HCT116 (cell line): ENCODE measurements at regions of chr18 and their contacts with region 1.

Region 1: GRCh38 chr18:741931-742512 is 29.6 kb upstream of the ENOSF1 start:
- DNase-seq: peak; percentile 34
- ATAC-seq: peak; percentile 85
- H3K4me3 ChIP-seq: no peak overlapping the region
- H3K27ac ChIP-seq: no peak overlapping the region
- H3K4me1 ChIP-seq: no peaks in the 10 kb centered on the region
- H3K27me3 ChIP-seq: no peaks in the 10 kb centered on the region
- CTCF ChIP-seq: peak; percentile 58 to 80 (median 76); a peak in 5 of 6 replicates
- POLR2A ChIP-seq: no peak
- RAD21 ChIP-seq: peak; percentile 82

Region 2: DNA sequence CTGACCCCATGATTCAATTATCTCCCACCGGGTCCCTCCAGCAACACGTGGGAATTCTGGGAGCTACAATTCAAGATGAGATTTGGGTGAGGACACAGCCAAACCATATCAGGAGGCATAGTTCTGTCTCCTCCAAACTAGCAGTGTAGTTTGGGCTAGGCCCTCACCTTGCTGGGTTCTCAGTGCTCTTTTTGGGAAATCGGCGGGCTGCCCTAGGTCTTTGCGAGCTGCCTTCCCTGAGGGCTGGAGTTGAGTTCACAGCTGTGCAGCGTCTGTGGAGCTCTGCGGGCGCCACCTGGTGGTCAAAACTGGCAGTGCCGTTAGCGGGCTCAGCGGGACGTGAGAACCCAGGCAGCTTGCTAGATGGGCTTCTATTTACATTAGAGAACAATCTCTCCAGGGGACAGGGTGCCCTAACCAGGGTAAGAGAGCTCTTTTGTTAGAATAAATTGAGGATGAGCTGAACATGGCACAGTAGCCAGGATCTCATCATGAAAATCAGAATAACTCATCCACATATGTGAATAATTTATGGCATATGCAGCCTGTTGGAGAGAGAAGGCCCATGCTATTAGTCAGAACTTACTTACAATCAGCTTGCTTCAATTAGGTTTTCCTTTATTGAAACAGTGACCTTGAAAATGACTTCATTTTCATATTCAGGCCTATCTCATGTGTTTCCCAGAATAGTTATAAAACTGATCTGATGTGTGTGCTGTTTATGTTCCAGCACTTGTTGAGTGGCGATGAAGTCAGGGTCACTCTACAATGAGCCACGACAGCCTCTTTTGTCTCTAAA is 97.4 kb after region 1 on chr18:
- CTCF ChIA-PET with region 1: interaction called, 16 read pairs
- POLR2A ChIA-PET with region 1: no interaction called
- RAD21 ChIA-PET with region 1: no interaction called
- intact Hi-C with region 1: loop called (anchors 1 kb)
- DNase-seq: peak; percentile 68
- ATAC-seq: peak; percentile 98
- H3K4me3 ChIP-seq: no peak overlapping the region
- H3K27ac ChIP-seq: no peak overlapping the region
- H3K4me1 ChIP-seq: peaks cover 7 to 34% of the 10 kb centered on the region in 2 experiments
- H3K27me3 ChIP-seq: no peaks in the 10 kb centered on the region
- CTCF ChIP-seq: peak; percentile 78 to 96 (median 93); a peak in 5 of 6 replicates
- POLR2A ChIP-seq: no peak
- RAD21 ChIP-seq: peak; percentile 73